A549 (cell line): ENCODE measurements at regions of chr17 and their contacts with region 1.

Region 1: DNA sequence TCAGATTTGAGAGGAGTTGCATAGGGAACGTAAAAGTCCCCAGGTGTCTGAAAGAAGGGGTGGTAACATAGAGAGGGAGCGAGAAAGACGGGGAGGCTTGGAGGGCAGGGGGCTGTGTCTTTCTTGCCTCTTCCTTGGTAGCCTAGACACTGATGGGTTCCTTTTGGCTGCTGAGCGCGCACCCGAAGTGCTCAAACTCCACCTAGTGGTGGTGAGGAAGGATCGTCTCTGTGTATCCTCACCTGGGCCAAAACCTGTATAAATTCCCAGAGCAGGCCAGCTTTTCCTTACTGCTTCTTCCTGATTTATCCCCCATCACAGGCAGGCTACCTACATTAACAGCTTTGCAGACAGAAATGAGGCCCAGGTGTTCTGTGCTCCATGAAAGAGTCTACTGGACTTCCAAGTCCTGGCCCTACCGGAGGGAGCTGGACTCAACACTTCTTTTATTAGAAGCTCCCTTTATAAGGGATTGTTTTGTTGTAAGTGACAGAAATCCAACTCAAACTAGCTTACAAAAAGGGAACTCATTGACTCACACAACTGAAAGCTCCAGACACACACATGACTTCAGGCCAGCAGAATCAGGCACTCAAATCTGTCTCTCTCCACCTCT is 5.5 kb upstream of the SLC25A35 start:
- DNase-seq: peak; percentile 87 to 94
- ATAC-seq: peak; percentile 95 to 99
- H3K4me3 ChIP-seq: no peak overlapping the region
- H3K27ac ChIP-seq: 0 out of 6 replicates have a peak overlapping the region, but pooled peaks of 1 of the 2 experiments have one; percentile 18
- H3K4me1 ChIP-seq: no peaks in the 10 kb centered on the region
- CTCF ChIP-seq: peak; percentile 94
- EP300 ChIP-seq: no peak
- POLR2A ChIP-seq: no peak
- RAD21 ChIP-seq: peak; percentile 92 to 98

Region 2: GRCh38 chr17:8243827-8244226 is 56.9 kb before region 1 on chr17:
- CTCF ChIA-PET with region 1: interaction called, 14 read pairs
- POLR2A ChIA-PET with region 1: interaction called, 70 read pairs
- DNase-seq: peak in 1 of 2 experiments; percentile 31
- ATAC-seq: no peak
- H3K4me3 ChIP-seq: no peak overlapping the region
- H3K27ac ChIP-seq: no peak overlapping the region
- H3K4me1 ChIP-seq: no peaks in the 10 kb centered on the region
- CTCF ChIP-seq: no peak
- EP300 ChIP-seq: no peak
- POLR2A ChIP-seq: no peak
- RAD21 ChIP-seq: no peak

Region 3: GRCh38 chr17:8255499-8255898 is 45.2 kb before region 1 on chr17:
- CTCF ChIA-PET with region 1: interaction called, 18 read pairs
- POLR2A ChIA-PET with region 1: interaction called, 9 read pairs
- DNase-seq: peak; percentile 47
- ATAC-seq: peak; percentile 80 to 87
- H3K4me3 ChIP-seq: no peak overlapping the region
- H3K27ac ChIP-seq: no peak overlapping the region
- H3K4me1 ChIP-seq: peaks cover 2% of the 10 kb centered on the region
- CTCF ChIP-seq: no peak
- EP300 ChIP-seq: no peak
- POLR2A ChIP-seq: no peak
- RAD21 ChIP-seq: no peak

Region 4: GRCh38 chr17:8315764-8316217 is 15.1 kb after region 1 on chr17:
- CTCF ChIA-PET with region 1: interaction called, 39 read pairs
- POLR2A ChIA-PET with region 1: interaction called, 5 read pairs
- DNase-seq: no peak
- ATAC-seq: no peak; a peak in 1 of 6 replicates
- H3K4me3 ChIP-seq: no peak overlapping the region
- H3K27ac ChIP-seq: no peak overlapping the region
- H3K4me1 ChIP-seq: no peaks in the 10 kb centered on the region
- CTCF ChIP-seq: no peak
- EP300 ChIP-seq: no peak
- POLR2A ChIP-seq: no peak
- RAD21 ChIP-seq: no peak

Region 5: GRCh38 chr17:8997994-8998628 is 697.4 kb after region 1 on chr17:
- CTCF ChIA-PET with region 1: no interaction called
- POLR2A ChIA-PET with region 1: no interaction called
- DNase-seq: peak; percentile 75 to 89
- ATAC-seq: peak; percentile 69 to 86
- H3K4me3 ChIP-seq: no peak overlapping the region
- H3K27ac ChIP-seq: no peak overlapping the region
- H3K4me1 ChIP-seq: no peaks in the 10 kb centered on the region
- CTCF ChIP-seq: peak; percentile 96
- EP300 ChIP-seq: no peak
- POLR2A ChIP-seq: no peak
- RAD21 ChIP-seq: peak; percentile 76 to 84